Heart left ventricle (tissue), 16 donors: ENCODE measurements at regions of chr6 and their contacts with region 1.

Region 1: DNA sequence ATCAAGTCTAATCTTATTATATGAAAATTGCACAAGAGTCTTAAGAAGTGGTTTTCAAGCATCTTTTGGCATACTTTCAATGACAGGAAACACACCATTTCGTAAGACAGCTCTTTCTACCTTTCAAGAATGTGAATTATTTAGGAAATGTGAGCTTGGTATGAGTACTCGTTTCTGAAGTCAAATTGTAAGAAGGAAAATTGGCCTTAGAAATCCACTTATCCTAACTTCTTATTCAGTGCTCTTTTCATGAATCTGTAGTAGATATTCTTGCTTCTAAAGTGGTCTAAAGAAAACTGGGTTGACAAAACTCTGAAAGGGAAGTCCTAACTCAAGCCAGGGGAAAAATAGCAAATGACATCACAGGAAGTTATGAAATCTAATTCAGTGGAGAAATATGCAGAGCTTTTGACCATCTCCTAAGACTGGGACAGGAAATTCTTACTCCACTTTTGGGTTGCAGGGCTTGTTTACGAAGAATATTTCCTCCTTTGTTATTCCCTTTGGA is 38.5 kb upstream of the OGFRL1 start:
- DNase-seq: peak in 1 of 5 donors; percentile 17
- ATAC-seq: peak; percentile 75 to 91 (median 88)
- H3K4me3 ChIP-seq: no peak overlapping the region
- H3K27ac ChIP-seq: peak overlapping the region; percentile 31 to 91 (median 70)
- H3K4me1 ChIP-seq: peaks cover 0 to 70% (median 22%) of the 10 kb centered on the region in 12 donors
- H3K27me3 ChIP-seq: no peaks in the 10 kb centered on the region
- CTCF ChIP-seq: no peak
- POLR2A ChIP-seq: no peak

Region 2: GRCh38 chr6:71197780-71198179 is 52.4 kb before region 1 on chr6:
- intact Hi-C with region 1: loop called in 1 of 10 experiments (anchors 5 kb)
- DNase-seq: no peak
- ATAC-seq: no peak
- H3K4me3 ChIP-seq: no peak overlapping the region
- H3K27ac ChIP-seq: no peak overlapping the region
- H3K4me1 ChIP-seq: no peaks in the 10 kb centered on the region
- H3K27me3 ChIP-seq: no peaks in the 10 kb centered on the region
- CTCF ChIP-seq: no peak
- POLR2A ChIP-seq: no peak